Caco-2 (cell line): ENCODE measurements at regions of chr10 and their contacts with region 1.

Region 1: DNA sequence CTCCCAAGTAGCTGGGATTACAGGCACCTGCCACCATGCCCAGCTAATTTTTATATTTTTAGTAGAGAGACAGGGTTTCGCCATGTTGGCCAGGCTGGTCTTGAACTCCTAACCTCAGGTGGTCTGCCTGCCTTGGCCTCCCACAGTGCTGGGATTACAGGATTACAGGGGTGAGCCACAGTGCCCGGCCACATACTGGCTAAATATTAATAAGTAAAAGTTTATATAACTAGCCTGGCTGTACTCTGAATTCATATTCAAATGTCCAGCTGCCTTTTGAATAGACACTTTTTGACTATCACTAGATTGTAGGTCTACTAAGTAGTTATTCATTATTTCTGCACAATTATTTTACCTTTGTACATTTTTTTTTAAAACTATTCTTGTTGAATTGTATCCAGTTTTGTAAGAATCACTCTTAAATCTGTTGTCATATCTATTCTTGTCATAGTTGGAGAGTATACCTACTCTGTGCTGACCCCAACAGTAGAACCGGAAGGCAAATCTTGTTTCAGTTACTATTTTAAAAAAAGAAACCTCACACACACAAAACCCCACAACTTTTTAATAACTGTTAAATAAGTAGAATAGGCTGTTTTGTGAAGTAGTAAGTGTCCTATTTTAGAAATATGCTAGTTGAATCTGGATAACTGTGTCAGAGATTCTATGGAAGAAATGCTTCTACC is 29.6 kb downstream of the MINPP1 start:
- DNase-seq: no peak
- H3K4me3 ChIP-seq: no peak overlapping the region
- H3K4me3 Mint-ChIP-seq: no peak overlapping the region
- H3K27ac Mint-ChIP-seq: no peak overlapping the region
- H3K4me1 ChIP-seq: no peaks in the 10 kb centered on the region
- H3K4me1 Mint-ChIP-seq: no peaks in the 10 kb centered on the region
- H3K27me3 ChIP-seq: no peaks in the 10 kb centered on the region
- H3K27me3 Mint-ChIP-seq: no peaks in the 10 kb centered on the region
- CTCF ChIP-seq: no peak

Region 2: GRCh38 chr10:87585565-87586514 is 51.5 kb after region 1 on chr10:
- CTCF ChIA-PET with region 1: no interaction called
- POLR2A ChIA-PET with region 1: no interaction called
- intact Hi-C with region 1: no loop called
- DNase-seq: peak; percentile 43 to 52
- H3K4me3 ChIP-seq: 0 out of 2 replicates have a peak overlapping the region, but pooled peaks have one; percentile 0
- H3K4me3 Mint-ChIP-seq: peak overlapping the region; percentile 38
- H3K27ac Mint-ChIP-seq: peak overlapping the region; percentile 19
- H3K4me1 ChIP-seq: peaks cover 31% of the 10 kb centered on the region
- H3K4me1 Mint-ChIP-seq: peaks cover 27% of the 10 kb centered on the region
- H3K27me3 ChIP-seq: no peaks in the 10 kb centered on the region
- H3K27me3 Mint-ChIP-seq: no peaks in the 10 kb centered on the region
- CTCF ChIP-seq: no peak

Region 3: DNA sequence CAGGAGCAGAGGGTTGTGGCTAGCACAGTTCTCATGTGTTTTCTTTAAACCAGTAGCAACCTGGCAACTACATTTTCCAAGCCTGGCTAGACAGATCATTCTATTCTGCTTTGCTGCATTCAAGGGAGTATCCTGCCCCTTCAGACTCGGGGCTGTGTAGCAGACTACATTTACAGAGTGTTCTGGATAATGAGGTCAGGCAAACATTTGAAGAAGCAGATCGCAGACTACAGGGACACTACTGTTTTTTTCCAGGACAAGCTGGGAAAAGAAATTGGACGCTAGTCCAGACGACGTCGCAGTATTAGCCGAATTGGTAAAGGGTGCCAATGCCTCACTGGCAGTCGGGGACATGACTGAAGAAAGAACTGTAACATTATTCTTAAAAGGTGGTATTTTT is 64.4 kb after region 1 on chr10:
- CTCF ChIA-PET with region 1: no interaction called
- POLR2A ChIA-PET with region 1: no interaction called
- intact Hi-C with region 1: no loop called
- DNase-seq: no peak
- H3K4me3 ChIP-seq: no peak overlapping the region
- H3K4me3 Mint-ChIP-seq: no peak overlapping the region
- H3K27ac Mint-ChIP-seq: no peak overlapping the region
- H3K4me1 ChIP-seq: no peaks in the 10 kb centered on the region
- H3K4me1 Mint-ChIP-seq: no peaks in the 10 kb centered on the region
- H3K27me3 ChIP-seq: no peaks in the 10 kb centered on the region
- H3K27me3 Mint-ChIP-seq: no peaks in the 10 kb centered on the region
- CTCF ChIP-seq: no peak

Region 4: DNA sequence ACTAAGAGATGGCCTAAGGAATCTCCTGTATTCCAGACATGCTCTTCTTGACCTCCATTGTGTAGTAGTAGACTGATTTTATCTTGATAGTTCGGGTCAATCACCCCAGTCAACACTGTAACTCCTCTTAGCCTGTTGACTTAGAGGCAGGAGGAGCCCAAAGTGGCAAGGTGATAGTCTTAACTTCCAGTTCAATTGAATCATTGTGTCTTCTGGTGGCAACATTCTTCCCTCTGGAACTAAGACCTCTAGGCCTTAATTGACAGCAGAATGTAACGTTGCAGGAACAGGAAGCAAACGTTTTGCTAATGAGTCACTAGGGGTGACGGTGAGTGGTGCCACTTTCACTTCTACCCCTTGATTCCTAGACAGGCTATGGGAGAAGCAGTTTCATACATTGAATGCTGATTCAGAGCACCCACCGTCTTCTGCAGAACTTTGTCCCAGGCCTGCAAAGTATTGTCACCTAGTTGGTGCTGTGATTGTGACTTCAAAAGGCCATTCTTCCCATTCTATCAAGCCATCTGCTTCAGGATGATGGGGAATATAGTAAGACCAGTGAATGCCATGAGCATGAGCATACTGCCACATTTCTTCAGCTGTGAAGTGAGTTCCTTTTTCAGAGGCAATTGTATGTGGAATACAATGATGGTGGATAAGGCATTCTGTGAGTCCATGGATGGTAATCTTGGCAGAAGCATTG is 101.4 kb after region 1 on chr10:
- CTCF ChIA-PET with region 1: no interaction called
- POLR2A ChIA-PET with region 1: no interaction called
- intact Hi-C with region 1: no loop called
- DNase-seq: no peak
- H3K4me3 ChIP-seq: no peak overlapping the region
- H3K4me3 Mint-ChIP-seq: no peak overlapping the region
- H3K27ac Mint-ChIP-seq: no peak overlapping the region
- H3K4me1 ChIP-seq: peaks cover 15% of the 10 kb centered on the region; the same call in 1 of the 2 replicates
- H3K4me1 Mint-ChIP-seq: no peaks in the 10 kb centered on the region
- H3K27me3 ChIP-seq: no peaks in the 10 kb centered on the region
- H3K27me3 Mint-ChIP-seq: no peaks in the 10 kb centered on the region
- CTCF ChIP-seq: no peak

Region 5: GRCh38 chr10:87734987-87735827 is 200.9 kb after region 1 on chr10:
- CTCF ChIA-PET with region 1: interaction called, 10 read pairs
- POLR2A ChIA-PET with region 1: no interaction called
- intact Hi-C with region 1: loop called (anchors 1 kb)
- DNase-seq: peak in 1 of 2 experiments; percentile 53
- H3K4me3 ChIP-seq: no peak overlapping the region
- H3K4me3 Mint-ChIP-seq: no peak overlapping the region
- H3K27ac Mint-ChIP-seq: no peak overlapping the region
- H3K4me1 ChIP-seq: 0 out of 2 replicates have a peak, but pooled peaks cover under 1% of the 10 kb centered on the region
- H3K4me1 Mint-ChIP-seq: no peaks in the 10 kb centered on the region
- H3K27me3 ChIP-seq: no peaks in the 10 kb centered on the region
- H3K27me3 Mint-ChIP-seq: no peaks in the 10 kb centered on the region
- CTCF ChIP-seq: peak; percentile 79

Region 6: DNA sequence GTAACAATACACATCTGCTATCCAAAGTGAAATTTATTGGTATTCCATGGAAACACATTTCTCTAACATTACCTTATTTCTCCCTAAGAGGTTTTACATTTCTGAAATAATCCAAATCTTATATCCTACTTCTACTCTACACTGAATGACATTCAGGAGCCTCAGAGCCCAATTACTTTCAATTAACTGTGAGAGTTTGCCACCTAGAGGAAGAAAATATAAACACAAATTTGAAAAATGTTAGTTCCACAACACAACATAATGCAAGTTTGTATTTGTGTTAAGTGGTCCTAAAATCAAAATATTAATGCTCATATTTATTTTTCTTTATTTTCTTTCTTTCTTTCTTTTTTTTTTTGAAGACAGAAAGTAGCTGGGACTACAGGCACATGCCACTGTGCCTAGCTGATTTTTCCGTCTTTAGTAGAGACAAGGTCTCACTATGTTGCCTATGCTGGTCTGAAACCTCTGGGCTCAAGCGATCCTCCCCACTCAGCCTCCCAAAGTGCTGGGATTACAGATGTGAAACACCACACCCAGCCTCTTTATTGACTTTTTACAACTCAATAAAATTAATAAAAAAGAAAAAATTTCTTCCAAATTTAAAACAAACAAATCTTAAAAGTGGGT is 237.7 kb after region 1 on chr10:
- CTCF ChIA-PET with region 1: interaction called, 3 read pairs
- POLR2A ChIA-PET with region 1: no interaction called
- intact Hi-C with region 1: loop called (anchors 1 kb)
- DNase-seq: peak in 1 of 2 experiments; percentile 23
- H3K4me3 ChIP-seq: no peak overlapping the region
- H3K4me3 Mint-ChIP-seq: no peak overlapping the region
- H3K27ac Mint-ChIP-seq: no peak overlapping the region
- H3K4me1 ChIP-seq: peaks cover 19% of the 10 kb centered on the region
- H3K4me1 Mint-ChIP-seq: peaks cover 7% of the 10 kb centered on the region
- H3K27me3 ChIP-seq: no peaks in the 10 kb centered on the region
- H3K27me3 Mint-ChIP-seq: no peaks in the 10 kb centered on the region
- CTCF ChIP-seq: peak; percentile 41 to 48